ENCODE measurements at regions of chr15 and their contacts with region 1.

Region 1: DNA sequence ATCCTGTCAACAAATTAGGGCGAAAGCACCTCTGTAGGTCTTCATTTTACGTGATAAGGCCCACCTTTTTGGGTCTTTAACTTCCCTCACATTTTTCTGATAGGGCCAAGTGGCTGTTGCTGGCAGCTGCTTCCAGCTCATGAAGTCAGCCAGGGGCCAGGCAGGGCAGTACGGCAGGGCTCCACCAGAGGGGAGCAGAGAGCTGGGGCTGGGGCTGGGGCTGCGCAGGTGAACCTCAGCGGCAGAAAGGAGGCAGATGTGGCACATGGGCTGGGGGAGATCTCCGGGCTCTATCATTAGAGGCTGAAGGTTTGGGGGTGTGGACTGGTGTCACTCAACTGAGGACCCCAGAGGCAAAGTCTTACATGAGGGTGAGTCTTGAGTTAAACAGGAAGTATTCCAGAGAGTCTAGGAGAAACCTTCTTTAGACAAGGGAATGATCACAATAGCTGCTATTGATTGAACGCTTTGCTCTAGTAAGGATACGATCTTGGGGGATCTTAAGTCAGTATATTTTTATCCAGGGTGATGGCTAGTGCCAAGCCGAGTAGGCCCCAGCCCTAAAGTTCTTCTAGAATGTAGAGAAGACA is 62.8 kb upstream of the MEX3B start:
- DNase-seq: peak; percentile 76
- H3K27ac ChIP-seq: no peak overlapping the region
- CTCF ChIP-seq: peak; percentile 83

Region 2: DNA sequence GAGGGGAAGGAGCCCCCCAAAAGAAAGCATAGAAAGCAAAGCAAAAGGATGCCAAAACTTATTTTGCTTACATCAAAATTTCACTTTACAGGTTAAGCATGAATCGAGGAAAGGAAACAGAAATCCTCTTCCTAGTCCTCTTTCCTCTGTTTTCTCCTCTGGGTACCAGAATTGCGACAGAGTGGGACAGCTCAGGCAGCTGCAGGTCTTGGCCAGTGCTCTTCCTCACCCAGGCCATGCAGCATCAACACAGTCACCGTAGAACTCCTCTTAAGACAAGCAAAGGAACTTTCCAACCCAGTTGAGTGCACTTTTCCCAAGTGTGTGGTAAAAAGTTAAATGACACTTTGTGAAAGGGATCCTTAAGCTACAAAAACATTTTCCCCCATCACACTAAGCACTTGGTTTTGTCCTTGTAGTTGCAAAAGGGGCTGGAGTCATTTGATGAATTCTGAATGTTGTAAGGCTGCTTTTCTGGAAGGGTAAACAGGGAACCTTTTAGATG is 16.9 kb before region 1 on chr15:
- CTCF ChIA-PET with region 1: no interaction called
- POLR2A ChIA-PET with region 1: no interaction called
- DNase-seq: no peak
- H3K27ac ChIP-seq: no peak overlapping the region
- CTCF ChIP-seq: no peak

Region 3: GRCh38 chr15:82122746-82123400 is 14.3 kb after region 1 on chr15:
- CTCF ChIA-PET with region 1: interaction called, 12 read pairs
- POLR2A ChIA-PET with region 1: no interaction called
- DNase-seq: peak; percentile 96
- H3K27ac ChIP-seq: peak overlapping the region; percentile 75
- CTCF ChIP-seq: no peak

Region 4: DNA sequence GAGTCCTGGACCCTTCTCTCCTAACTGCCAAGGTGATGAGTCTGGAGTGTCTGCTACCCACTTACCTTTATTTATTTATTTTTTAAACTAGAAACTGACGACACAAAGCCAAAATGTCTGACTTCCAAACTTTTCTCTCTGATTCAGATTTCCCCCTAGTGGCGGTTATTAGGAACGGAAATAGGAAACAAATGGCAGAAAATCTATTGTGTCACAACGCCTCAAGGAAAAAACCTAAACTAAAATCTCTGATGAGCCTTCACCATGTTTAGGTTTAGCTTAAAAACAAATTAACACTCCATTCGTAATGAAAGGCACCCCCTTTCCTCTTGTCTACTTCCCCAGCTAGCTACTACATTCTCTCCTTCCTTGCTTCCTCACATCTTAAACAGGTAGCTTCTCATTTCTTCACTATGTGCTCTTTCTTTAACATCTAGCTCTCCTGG is 31.3 kb after region 1 on chr15:
- CTCF ChIA-PET with region 1: interaction called, 14 read pairs
- POLR2A ChIA-PET with region 1: no interaction called
- DNase-seq: peak; percentile 54
- H3K27ac ChIP-seq: no peak overlapping the region
- CTCF ChIP-seq: peak; percentile 89

Region 5: DNA sequence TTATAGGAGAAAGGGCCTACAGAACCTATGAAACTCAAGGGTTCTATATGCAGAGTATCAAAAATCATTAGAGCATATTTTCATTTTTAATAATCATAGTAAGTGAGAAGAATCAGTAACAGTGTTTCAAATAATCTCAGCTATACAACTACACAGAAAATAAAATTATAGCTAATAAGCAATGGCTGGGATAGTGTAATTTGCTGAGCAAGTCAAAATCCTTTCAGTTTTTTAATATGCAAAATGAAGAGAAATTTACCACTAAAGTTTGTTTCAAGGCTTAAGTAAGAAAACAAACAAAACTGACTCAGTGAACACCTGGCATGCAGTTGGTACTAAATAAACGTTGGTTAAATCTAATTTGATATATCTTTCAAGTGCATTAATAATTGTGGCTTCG is 87.8 kb after region 1 on chr15:
- CTCF ChIA-PET with region 1: interaction called, 10 read pairs
- POLR2A ChIA-PET with region 1: no interaction called
- DNase-seq: no peak
- H3K27ac ChIP-seq: no peak overlapping the region
- CTCF ChIP-seq: no peak

Measured in RWPE1 (cell line).